ENCODE measurements at regions of chr10 and their contacts with region 1.

Region 1: GRCh38 chr10:100185364-100186252 is at the start of gene ERLIN1:
- DNase-seq: peak; percentile 96
- ATAC-seq: peak; percentile 92
- H3K4me3 Mint-ChIP-seq: peak within 1 kb of the TSS; percentile 98
- H3K27ac Mint-ChIP-seq: peak within 1 kb of the TSS; percentile 92
- H3K4me1 Mint-ChIP-seq: peaks cover 37% of the 10 kb centered on the region
- H3K27me3 Mint-ChIP-seq: no peaks in the 10 kb centered on the region
- CTCF ChIP-seq: no peak
- total RNA-seq, gene ERLIN1: 5.6 and 7.6 TPM in 2 replicates

Region 2: DNA sequence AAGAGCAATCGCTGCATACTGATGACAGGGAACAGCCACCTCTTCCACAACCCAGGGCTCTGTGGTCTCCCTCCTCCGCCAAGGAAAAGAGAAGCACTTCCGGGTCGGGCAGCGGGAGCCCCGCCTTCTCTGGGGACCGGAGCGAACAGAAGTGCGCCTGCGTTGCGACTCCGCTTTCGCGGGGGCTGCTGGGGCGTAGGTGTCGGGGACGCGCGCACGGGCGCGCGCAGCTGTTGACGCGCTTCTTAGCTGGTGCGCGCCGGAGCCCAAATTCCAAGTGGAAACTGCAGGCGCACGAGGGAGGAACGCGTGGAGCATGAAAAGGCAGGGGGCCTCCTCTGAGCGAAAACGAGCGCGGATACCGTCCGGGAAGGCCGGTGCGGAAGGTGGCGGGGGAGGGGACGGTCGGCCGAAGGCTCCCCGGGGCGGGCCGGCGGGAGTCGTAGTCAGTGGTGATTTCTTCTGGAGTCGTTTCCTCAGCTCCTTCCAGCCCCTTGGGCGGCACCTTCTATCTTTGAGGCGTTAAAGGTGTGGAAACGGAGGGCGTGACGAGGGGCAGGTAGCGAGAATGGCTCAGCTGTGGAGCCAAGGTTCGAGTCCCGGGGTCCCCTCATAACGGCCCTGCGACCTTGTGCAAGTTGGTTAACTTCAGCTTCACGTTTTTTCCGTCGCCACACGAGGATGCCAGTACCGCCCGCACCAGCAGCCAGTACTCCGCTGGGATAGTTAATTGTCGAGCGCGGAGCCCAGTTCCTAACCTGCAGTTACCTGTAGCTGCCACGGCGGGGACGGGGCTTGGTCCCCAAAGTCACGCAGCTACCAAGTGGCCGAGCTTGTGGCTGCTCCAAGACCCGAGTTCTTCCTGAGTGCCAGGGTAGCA is 453.3 kb before region 1 on chr10 and contains the starts of genes COX15 and CUTC:
- CTCF ChIA-PET with region 1: no interaction called
- POLR2A ChIA-PET with region 1: no interaction called
- intact Hi-C with region 1: loop called (anchors 5 kb)
- DNase-seq: peak; percentile 91
- ATAC-seq: peak; percentile 88
- H3K4me3 Mint-ChIP-seq: peak within 1 kb of the TSS; percentile 100
- H3K27ac Mint-ChIP-seq: peak within 1 kb of the TSS; percentile 99
- H3K4me1 Mint-ChIP-seq: peaks cover 31% of the 10 kb centered on the region
- H3K27me3 Mint-ChIP-seq: no peaks in the 10 kb centered on the region
- CTCF ChIP-seq: no peak
- total RNA-seq, gene COX15: 39.8 and 44.5 TPM in 2 replicates
- total RNA-seq, gene CUTC: 25.4 and 27.5 TPM in 2 replicates

Region 3: DNA sequence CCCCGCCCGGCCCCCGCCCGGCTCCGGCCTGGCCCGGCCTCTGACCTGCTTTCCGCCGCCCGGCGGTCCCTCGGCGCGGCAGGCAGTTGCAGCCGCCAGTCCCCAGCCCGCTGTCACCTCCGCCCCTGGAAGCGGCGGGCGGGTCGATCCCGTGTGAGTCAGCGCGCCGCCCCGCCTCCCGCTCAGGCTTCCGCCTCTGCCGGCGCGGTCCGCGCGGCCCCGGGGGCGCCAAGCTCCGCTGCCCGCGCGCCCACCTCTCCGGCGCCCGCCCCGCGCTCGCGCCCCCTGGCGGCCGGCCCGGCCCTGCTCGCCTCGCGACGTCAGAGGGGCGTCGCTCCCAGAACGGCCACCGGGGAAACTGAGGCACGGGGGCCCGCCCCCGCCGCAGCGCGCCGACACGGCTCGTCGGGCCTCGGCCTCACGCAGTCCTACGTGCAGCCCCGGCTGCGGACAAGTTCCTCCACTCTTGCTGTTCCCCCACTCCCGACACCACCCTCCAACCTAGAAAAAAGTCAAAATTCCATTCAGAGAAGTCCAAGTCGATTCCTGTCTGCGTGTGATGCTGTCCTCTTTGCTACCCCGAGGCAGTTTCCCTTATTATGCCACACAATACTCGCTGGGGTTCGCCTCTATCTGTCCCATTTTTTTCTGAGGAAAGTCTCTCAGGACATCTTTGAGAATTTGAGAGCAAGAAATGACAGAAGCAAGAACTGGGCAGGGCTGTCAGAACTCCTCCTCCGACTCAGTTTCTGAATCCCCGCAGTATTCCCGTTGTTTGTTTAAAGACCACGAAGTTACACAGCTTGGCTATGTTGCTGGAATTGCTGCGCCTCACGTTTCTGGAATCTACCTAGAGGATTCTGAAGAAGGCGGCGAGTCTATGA is 175.6 kb before region 1 on chr10 and contains the start of gene DNMBP:
- CTCF ChIA-PET with region 1: no interaction called
- POLR2A ChIA-PET with region 1: no interaction called
- intact Hi-C with region 1: loop called (anchors 10 kb)
- DNase-seq: peak; percentile 88
- ATAC-seq: peak; percentile 88
- H3K4me3 Mint-ChIP-seq: peak within 1 kb of the TSS; percentile 91
- H3K27ac Mint-ChIP-seq: peak within 1 kb of the TSS; percentile 89
- H3K4me1 Mint-ChIP-seq: peaks cover 75% of the 10 kb centered on the region
- H3K27me3 Mint-ChIP-seq: no peaks in the 10 kb centered on the region
- CTCF ChIP-seq: no peak
- total RNA-seq, gene DNMBP: 12.5 and 13.1 TPM in 2 replicates

Region 4: GRCh38 chr10:100209303-100209702 is 23.7 kb after region 1 on chr10:
- CTCF ChIA-PET with region 1: no interaction called
- POLR2A ChIA-PET with region 1: no interaction called
- intact Hi-C with region 1: no loop called
- DNase-seq: no peak
- ATAC-seq: no peak
- H3K4me3 Mint-ChIP-seq: no peak overlapping the region
- H3K27ac Mint-ChIP-seq: no peak overlapping the region
- H3K4me1 Mint-ChIP-seq: no peaks in the 10 kb centered on the region
- H3K27me3 Mint-ChIP-seq: no peaks in the 10 kb centered on the region
- CTCF ChIP-seq: no peak

Region 5: DNA sequence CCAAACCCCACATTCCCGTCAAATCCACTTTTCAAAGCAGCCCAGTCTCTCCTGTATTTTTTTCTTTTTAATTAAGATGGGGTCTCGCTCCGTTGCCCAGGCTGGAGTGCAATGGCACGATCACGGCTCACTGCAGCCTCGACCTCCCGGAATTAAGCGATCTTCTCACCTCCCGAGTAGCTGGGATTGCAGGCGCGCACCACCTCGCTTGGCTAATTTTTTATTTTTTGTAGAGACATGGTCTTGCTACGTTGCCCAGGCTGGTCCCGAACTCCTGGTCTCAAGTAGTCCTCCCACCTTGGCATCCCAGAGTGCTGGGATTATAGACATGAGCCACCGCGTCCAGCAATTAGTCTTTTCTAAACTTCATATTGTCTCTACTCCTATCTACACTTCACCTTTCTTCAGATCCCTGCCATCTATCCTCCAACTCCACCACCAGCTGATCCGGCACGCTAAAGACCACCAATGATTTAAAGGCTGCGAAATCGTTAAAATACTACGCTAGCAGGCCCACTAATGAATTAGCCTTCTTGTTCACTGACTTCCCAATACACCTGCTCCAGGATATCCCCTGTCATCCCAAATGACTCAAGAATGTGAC is 44.3 kb after region 1 on chr10:
- CTCF ChIA-PET with region 1: no interaction called
- POLR2A ChIA-PET with region 1: no interaction called
- intact Hi-C with region 1: loop called (anchors 1 kb)
- DNase-seq: no peak
- ATAC-seq: no peak
- H3K4me3 Mint-ChIP-seq: peak overlapping the region; percentile 90
- H3K27ac Mint-ChIP-seq: peak overlapping the region; percentile 87
- H3K4me1 Mint-ChIP-seq: peaks cover 29% of the 10 kb centered on the region
- H3K27me3 Mint-ChIP-seq: no peaks in the 10 kb centered on the region
- CTCF ChIP-seq: no peak

Region 6: GRCh38 chr10:100267237-100268104 is 81.9 kb after region 1 on chr10 and contains the start of gene CWF19L1:
- CTCF ChIA-PET with region 1: no interaction called
- POLR2A ChIA-PET with region 1: no interaction called
- intact Hi-C with region 1: loop called (anchors 1 kb)
- DNase-seq: peak; percentile 62
- ATAC-seq: peak; percentile 80
- H3K4me3 Mint-ChIP-seq: peak within 1 kb of the TSS; percentile 99
- H3K27ac Mint-ChIP-seq: peak within 1 kb of the TSS; percentile 97
- H3K4me1 Mint-ChIP-seq: peaks cover 33% of the 10 kb centered on the region
- H3K27me3 Mint-ChIP-seq: no peaks in the 10 kb centered on the region
- CTCF ChIP-seq: no peak
- total RNA-seq, gene CWF19L1: 41.8 and 53.3 TPM in 2 replicates

Region 7: GRCh38 chr10:100535715-100536353 is 350.2 kb after region 1 on chr10 and contains the start of gene HIF1AN:
- CTCF ChIA-PET with region 1: no interaction called
- POLR2A ChIA-PET with region 1: no interaction called
- intact Hi-C with region 1: loop called (anchors 5 kb)
- DNase-seq: peak; percentile 79
- ATAC-seq: peak; percentile 100
- H3K4me3 Mint-ChIP-seq: no peak within 1 kb of the TSS
- H3K27ac Mint-ChIP-seq: no peak within 1 kb of the TSS
- H3K4me1 Mint-ChIP-seq: peaks cover 14% of the 10 kb centered on the region
- H3K27me3 Mint-ChIP-seq: no peaks in the 10 kb centered on the region
- CTCF ChIP-seq: peak; percentile 3
- total RNA-seq, gene HIF1AN: 55.8 and 59.9 TPM in 2 replicates

Region 8: DNA sequence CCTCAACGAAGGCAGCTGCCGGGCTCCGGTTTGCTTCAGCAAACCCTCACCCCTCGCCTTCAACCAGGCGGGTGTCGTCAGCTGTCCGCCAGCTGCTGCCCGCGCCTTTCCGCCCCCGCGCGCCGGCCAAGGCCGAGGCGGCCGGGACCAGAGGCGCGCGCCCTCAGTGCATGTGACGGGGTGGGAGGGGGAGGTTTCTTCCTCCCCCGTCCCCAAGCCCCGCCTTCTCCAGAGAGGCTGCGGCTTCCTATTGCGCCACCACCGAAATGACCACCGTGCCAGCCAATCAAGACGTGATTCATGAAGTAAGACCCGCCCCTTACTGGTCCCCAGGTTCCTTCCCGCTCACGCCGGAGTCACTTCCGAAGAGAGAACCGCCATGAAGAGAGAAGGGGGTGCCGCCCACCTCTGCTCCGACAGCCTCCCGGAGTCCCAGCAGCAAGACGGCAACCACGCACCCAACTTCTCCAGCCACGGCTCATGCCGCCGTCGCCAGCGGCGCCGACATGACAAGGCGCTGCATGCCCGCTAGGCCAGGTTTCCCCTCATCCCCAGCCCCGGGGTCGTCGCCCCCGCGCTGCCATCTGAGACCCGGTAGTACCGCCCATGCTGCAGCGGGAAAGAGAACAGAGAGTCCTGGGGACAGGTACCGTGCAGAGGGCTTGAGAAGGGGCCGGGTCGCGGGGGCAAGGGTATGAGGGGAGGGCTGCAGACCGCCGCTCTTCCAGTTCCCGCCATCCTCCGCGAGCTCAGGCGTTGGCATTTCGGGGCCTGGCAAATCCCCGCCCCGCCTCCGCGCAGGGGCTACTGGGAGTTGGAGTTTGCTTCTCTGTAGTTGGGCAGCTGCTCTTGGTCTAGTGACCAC is 727.2 kb after region 1 on chr10 and contains the start of gene SLF2:
- CTCF ChIA-PET with region 1: no interaction called
- POLR2A ChIA-PET with region 1: no interaction called
- intact Hi-C with region 1: loop called (anchors 5 kb)
- DNase-seq: peak; percentile 82
- ATAC-seq: peak; percentile 97
- H3K4me3 Mint-ChIP-seq: peak within 1 kb of the TSS; percentile 99
- H3K27ac Mint-ChIP-seq: peak within 1 kb of the TSS; percentile 96
- H3K4me1 Mint-ChIP-seq: peaks cover 33% of the 10 kb centered on the region
- H3K27me3 Mint-ChIP-seq: no peaks in the 10 kb centered on the region
- CTCF ChIP-seq: no peak
- total RNA-seq, gene SLF2: 29.9 and 35.5 TPM in 2 replicates